ENCODE measurements at regions of chr21 and their contacts with region 1.

Region 1: GRCh38 chr21:32403201-32403777 is 9.2 kb upstream of the EVA1C start:
- DNase-seq: peak; percentile 81
- H3K4me3 ChIP-seq: no peak overlapping the region
- H3K27ac ChIP-seq: no peak overlapping the region
- H3K4me1 ChIP-seq: no peaks in the 10 kb centered on the region
- H3K27me3 ChIP-seq: no peaks in the 10 kb centered on the region
- CTCF ChIP-seq: peak; percentile 60 to 75 (median 68)
- POLR2A ChIP-seq: no peak

Region 2: GRCh38 chr21:32569261-32570230 is 166.3 kb after region 1 on chr21:
- intact Hi-C with region 1: loop called (anchors 10 kb)
- DNase-seq: peak; percentile 91
- H3K4me3 ChIP-seq: peak overlapping the region; percentile 43 to 75
- H3K27ac ChIP-seq: peak overlapping the region; percentile 77 to 88
- H3K4me1 ChIP-seq: peaks cover 6% of the 10 kb centered on the region
- H3K27me3 ChIP-seq: no peaks in the 10 kb centered on the region
- CTCF ChIP-seq: peak; percentile 75 to 77 (median 76)
- POLR2A ChIP-seq: no peak

Region 3: GRCh38 chr21:33238565-33239255 is 835.4 kb after region 1 on chr21:
- intact Hi-C with region 1: no loop called
- DNase-seq: no peak
- H3K4me3 ChIP-seq: no peak overlapping the region
- H3K27ac ChIP-seq: no peak overlapping the region
- H3K4me1 ChIP-seq: no peaks in the 10 kb centered on the region
- H3K27me3 ChIP-seq: no peaks in the 10 kb centered on the region
- CTCF ChIP-seq: no peak
- POLR2A ChIP-seq: no peak